ENCODE measurements at regions of chr19 and their contacts with region 1.

Region 1: DNA sequence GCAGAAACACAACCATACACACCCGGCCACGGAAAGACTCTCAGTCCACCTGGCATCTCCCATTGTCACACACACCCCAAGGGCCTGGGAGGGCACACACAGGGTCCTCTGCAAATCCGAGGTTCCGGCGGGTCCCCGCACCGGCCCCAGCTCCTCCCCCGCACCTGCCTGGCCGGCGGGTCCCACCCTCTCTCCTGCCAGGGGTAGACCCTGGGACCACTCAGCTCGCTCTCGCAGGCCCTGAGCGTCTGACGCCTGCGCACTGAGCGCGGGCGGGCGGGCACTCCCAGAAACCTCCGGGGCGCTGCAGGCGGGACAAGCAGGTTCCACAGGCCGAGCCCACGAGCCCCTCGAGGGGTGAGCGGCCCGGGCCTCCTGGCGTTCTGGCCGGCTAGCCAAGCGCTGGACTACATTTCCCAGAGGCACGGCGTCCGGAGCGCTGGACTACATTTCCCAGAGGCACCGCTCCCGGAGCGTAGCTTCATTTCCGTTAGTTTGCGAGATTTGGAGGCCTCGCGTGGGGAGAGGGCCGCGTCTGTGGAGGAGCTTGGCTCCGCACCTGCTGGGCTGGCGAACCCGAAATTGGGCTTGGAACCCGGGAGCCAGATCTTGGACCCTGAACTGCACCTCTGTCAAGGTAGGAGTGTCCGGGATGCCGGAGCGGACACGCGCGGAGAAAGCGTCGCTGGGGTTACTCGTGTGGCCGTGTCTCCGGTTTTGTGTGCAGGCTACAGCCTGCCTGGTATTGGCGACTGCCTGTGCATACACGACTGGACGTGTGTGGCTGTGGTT is at the start of gene ZNF420:
- DNase-seq: peak; percentile 96
- H3K4me3 Mint-ChIP-seq: peak within 1 kb of the TSS; percentile 91
- H3K27ac Mint-ChIP-seq: peak within 1 kb of the TSS; percentile 92
- H3K4me1 Mint-ChIP-seq: peaks cover 17% of the 10 kb centered on the region
- H3K27me3 Mint-ChIP-seq: no peaks in the 10 kb centered on the region
- total RNA-seq, gene ZNF420: 9.8 and 11.9 TPM in 2 replicates

Region 2: GRCh38 chr19:36489118-36489919 is 588.8 kb before region 1 on chr19 and contains the start of gene ZNF566:
- intact Hi-C with region 1: loop called (anchors 1 kb)
- DNase-seq: peak; percentile 97
- H3K4me3 Mint-ChIP-seq: peak within 1 kb of the TSS; percentile 99
- H3K27ac Mint-ChIP-seq: peak within 1 kb of the TSS; percentile 99
- H3K4me1 Mint-ChIP-seq: peaks cover 23% of the 10 kb centered on the region
- H3K27me3 Mint-ChIP-seq: no peaks in the 10 kb centered on the region
- total RNA-seq, gene ZNF566: 7.2 and 8.5 TPM in 2 replicates

Region 3: GRCh38 chr19:36837906-36838783 is 240.0 kb before region 1 on chr19 and contains the start of gene ZNF790:
- intact Hi-C with region 1: loop called (anchors 1 kb)
- DNase-seq: peak; percentile 94
- H3K4me3 Mint-ChIP-seq: no peak within 1 kb of the TSS
- H3K27ac Mint-ChIP-seq: peak within 1 kb of the TSS; percentile 49
- H3K4me1 Mint-ChIP-seq: peaks cover 4% of the 10 kb centered on the region
- H3K27me3 Mint-ChIP-seq: no peaks in the 10 kb centered on the region
- total RNA-seq, gene ZNF790: 5.1 and 6.7 TPM in 2 replicates

Region 4: DNA sequence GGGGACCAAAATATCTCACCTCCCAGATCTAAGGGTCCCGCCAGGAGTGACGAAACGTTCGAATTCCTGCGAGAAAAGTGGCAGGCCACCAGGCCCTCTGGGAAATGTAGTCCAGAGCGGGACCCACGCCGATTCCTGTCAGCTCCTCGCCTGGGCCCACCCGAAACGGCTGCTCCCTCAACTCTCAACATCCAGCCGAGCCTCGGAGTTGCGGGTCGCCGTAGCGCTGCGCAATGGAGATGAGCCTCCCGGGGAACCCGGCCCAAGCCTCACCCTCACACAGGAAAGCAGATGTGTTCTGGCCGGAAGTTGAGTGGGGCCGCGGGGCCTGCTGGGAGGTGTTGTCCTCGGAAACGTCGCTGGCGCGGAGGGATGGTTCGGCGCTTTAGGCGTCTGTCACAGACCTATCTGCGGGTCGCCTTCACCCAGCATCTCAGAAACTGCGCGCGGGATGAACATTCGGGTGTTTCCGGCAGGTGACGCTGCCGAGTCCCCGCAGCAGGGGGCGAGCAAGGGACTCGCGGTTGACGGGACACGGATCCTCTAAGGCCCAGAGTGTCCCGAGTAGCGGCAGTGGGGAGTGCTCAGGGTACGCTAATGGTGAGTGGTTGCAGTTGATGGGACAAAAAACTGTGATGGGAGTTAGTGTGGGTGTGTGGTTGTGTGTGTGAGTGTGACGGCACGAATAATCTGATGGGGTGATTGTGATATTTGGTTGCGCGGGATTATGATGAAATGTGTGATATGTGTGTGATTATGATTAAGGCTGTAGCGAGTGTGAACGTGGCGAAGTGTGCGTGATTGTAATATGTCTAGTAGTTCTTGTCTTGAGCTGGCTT is 161.9 kb before region 1 on chr19 and contains the starts of genes ZNF568 and ZNF829:
- intact Hi-C with region 1: loop called (anchors 1 kb)
- DNase-seq: peak; percentile 97
- H3K4me3 Mint-ChIP-seq: peak within 1 kb of the TSS; percentile 90
- H3K27ac Mint-ChIP-seq: peak within 1 kb of the TSS; percentile 96
- H3K4me1 Mint-ChIP-seq: peaks cover 19% of the 10 kb centered on the region
- H3K27me3 Mint-ChIP-seq: no peaks in the 10 kb centered on the region
- total RNA-seq, gene ZNF568: 4.4 and 6.1 TPM in 2 replicates
- total RNA-seq, gene ZNF829: 4.8 TPM in 2 replicates

Region 5: GRCh38 chr19:37160153-37160552 is 82.0 kb after region 1 on chr19:
- intact Hi-C with region 1: no loop called
- DNase-seq: no peak
- H3K4me3 Mint-ChIP-seq: no peak overlapping the region
- H3K27ac Mint-ChIP-seq: no peak overlapping the region
- H3K4me1 Mint-ChIP-seq: no peaks in the 10 kb centered on the region
- H3K27me3 Mint-ChIP-seq: no peaks in the 10 kb centered on the region

Region 6: GRCh38 chr19:37172368-37173366 is 94.5 kb after region 1 on chr19 and contains the start of gene ZNF585A:
- intact Hi-C with region 1: loop called (anchors 1 kb)
- DNase-seq: peak; percentile 94
- H3K4me3 Mint-ChIP-seq: no peak within 1 kb of the TSS
- H3K27ac Mint-ChIP-seq: no peak within 1 kb of the TSS
- H3K4me1 Mint-ChIP-seq: no peaks in the 10 kb centered on the region
- H3K27me3 Mint-ChIP-seq: no peaks in the 10 kb centered on the region
- total RNA-seq, gene ZNF585A: 2.7 and 3.9 TPM in 2 replicates

Measured in activated CD4-positive, alpha-beta T cell treated with anti-CD3 and anti-CD28 coated beads, Interleukin-2, amount 10 ng/mL, durations not matched to agents 24 days and 14 days (primary cell).